AG04449 (cell line): ENCODE measurements at regions of chr21 and their contacts with region 1.

Region 1: GRCh38 chr21:38755681-38756371 is 49.9 kb upstream of the ETS2 start:
- DNase-seq: peak; percentile 90
- H3K4me3 ChIP-seq: no peak overlapping the region
- CTCF ChIP-seq: no peak

Region 2: DNA sequence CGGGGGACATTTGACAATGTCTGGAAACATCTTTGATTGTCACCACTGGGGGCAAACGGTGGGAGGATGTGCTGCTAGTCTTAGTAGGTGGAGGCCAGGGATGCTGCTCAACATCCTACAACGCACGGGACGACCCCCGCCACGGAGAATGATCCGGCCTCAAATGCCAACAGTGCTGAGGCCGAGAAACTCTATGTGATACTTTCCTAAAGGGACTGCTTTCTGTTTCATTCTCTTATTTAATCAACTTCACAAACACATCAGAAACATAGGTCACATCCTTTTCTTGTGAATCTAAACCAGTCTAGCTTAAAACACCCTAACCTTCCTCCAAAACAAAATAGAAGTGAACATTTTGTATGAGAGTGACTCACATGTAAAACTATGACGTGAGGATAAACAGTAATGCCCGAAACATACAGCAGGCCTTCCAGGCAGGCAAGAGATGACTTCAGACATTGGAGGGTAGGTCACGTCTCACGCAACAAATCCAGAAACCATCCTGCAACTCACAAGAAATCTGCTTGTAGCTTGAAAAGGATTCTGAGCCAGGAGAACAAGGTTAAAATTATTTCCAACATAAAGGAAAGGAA is 12.7 kb after region 1 on chr21:
- CTCF ChIA-PET with region 1: interaction called, 3 read pairs
- POLR2A ChIA-PET with region 1: interaction called, 11 read pairs
- DNase-seq: peak; percentile 90
- H3K4me3 ChIP-seq: no peak overlapping the region
- CTCF ChIP-seq: no peak